BJ (cell line): ENCODE measurements at regions of chr14 and their contacts with region 1.

Region 1: GRCh38 chr14:102694530-102695166 is 82.6 kb upstream of the TRAF3 start:
- DNase-seq: peak; percentile 13
- H3K4me3 ChIP-seq: no peak overlapping the region
- H3K27me3 ChIP-seq: no peaks in the 10 kb centered on the region
- CTCF ChIP-seq: peak; percentile 58

Region 2: DNA sequence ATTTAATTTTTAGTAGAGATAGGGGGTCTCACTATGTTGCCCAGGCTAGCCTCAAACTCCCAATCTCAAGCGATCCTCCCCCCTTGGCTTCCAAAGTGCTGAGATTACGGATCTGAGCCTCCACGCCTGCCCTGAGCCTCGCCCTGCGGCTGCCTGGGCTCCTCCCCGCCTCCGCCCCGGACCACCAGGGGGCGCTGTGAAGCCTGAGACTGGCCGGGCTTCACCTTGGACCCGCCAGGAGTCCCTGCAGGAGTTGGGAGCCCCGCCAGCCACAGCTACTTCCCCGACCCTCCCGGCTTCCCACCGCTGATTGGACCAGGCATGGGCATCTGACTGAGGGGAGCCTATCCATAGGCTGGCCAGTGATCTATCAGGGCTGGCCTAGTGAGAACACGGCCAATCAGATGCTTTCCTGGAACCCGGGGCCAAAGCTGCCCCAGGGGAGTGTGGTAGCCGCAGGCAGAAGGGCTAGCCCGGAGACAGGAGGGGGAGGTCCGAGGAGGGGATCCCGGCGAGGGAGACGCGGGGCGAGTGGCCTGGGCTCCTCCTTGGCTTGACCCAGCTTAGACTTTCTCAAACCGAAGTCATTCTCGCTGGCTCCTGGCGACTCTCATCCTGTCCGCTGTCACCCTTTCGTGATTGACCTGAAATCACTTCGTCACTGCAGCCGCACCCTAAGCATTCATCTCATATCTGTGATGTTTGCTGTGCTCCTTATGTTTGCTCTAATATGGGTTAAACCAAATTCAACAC is 170.0 kb before region 1 on chr14:
- CTCF ChIA-PET with region 1: interaction called, 19 read pairs
- POLR2A ChIA-PET with region 1: no interaction called
- DNase-seq: peak; percentile 90
- H3K4me3 ChIP-seq: peak overlapping the region; percentile 73
- H3K27me3 ChIP-seq: no peaks in the 10 kb centered on the region
- CTCF ChIP-seq: peak; percentile 99

Region 3: DNA sequence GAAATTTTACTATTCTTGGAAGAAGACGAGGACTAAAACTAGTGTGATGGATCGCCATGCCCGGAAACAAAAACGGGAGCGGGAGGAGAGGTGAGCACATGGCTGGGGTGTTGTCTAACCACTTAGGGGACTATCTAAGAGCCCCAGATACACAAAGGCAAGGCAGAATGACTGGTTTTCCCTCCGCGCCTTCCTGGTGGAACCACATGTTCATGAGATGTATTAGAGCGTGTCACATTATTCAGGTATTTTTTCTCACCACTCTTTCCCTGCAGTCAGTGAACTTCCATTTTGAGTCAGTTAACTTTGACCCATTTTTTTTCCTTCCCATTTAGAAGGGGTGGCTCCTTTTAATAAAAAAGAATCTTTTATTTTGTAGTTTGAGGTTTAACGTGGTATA is 13.8 kb after region 1 on chr14:
- CTCF ChIA-PET with region 1: interaction called, 21 read pairs
- POLR2A ChIA-PET with region 1: no interaction called
- DNase-seq: no peak
- H3K4me3 ChIP-seq: no peak overlapping the region
- H3K27me3 ChIP-seq: no peaks in the 10 kb centered on the region
- CTCF ChIP-seq: no peak

Region 4: GRCh38 chr14:102774391-102775153 is 79.9 kb after region 1 on chr14:
- CTCF ChIA-PET with region 1: interaction called, 18 read pairs
- POLR2A ChIA-PET with region 1: no interaction called
- DNase-seq: no peak
- H3K4me3 ChIP-seq: no peak overlapping the region
- H3K27me3 ChIP-seq: peaks cover 5% of the 10 kb centered on the region
- CTCF ChIP-seq: peak; percentile 89

Region 5: GRCh38 chr14:102917469-102918211 is 223.0 kb after region 1 on chr14:
- CTCF ChIA-PET with region 1: interaction called, 23 read pairs
- POLR2A ChIA-PET with region 1: no interaction called
- DNase-seq: no peak
- H3K4me3 ChIP-seq: no peak overlapping the region
- H3K27me3 ChIP-seq: no peaks in the 10 kb centered on the region
- CTCF ChIP-seq: peak; percentile 76